ENCODE measurements at regions of chr18 and their contacts with region 1.

Region 1: DNA sequence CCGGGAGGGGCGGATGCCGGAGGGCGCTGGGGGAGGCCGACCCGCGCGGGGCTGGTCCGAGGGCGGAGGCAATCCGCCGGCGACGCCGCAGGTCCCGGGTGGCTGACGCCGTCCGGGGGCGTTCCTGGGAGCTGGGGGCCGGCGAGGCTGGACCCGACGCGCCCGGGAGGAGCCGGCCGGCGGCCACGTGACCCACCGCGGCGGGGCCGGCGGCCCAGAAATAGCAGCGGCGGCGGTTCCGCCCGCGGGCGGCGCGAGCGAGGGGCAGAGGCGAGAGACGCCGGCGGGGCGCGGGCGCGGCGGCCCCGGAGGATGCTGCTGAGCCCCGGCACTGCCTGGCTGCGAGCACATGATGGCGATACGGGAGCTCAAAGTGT is at the start of gene RAB31:
- DNase-seq: peak; percentile 54 to 83 (median 65)
- ATAC-seq: peak; percentile 76 to 85 (median 83)
- H3K4me3 ChIP-seq: peak within 1 kb of the TSS; percentile 28 to 59 (median 54)
- H3K27ac ChIP-seq: peak within 1 kb of the TSS in 2 of 4 donors; percentile 69 to 78
- H3K4me1 ChIP-seq: no peaks in the 10 kb centered on the region
- H3K27me3 ChIP-seq: no peaks in the 10 kb centered on the region
- CTCF ChIP-seq: no peak
- total RNA-seq, gene RAB31: 1.4 to 28.2 (median 5.5) TPM

Region 2: DNA sequence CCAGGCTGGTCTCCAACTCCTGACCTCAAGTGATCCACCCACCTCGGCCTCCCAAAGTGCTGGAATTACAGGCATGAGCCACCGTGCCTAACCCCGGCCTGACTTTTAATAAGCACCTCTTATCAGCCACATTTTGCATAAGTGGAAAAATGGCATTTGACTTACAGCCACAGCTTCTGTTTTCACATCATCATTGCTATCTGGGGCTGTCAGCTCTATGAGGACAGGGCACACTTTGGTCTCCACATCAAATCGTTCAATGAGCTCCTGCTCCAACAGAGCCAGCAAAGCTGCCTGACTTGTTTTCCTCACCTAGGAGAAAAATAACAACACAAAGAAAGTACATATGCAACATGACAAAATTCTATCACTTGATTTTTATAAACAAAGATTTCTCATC is 120.1 kb before region 1 on chr18:
- intact Hi-C with region 1: loop called in 1 of 3 experiments (anchors 10 kb)
- DNase-seq: no peak
- ATAC-seq: no peak
- H3K4me3 ChIP-seq: no peak overlapping the region
- H3K27ac ChIP-seq: no peak overlapping the region
- H3K4me1 ChIP-seq: peaks cover 0 to 4% (median 3%) of the 10 kb centered on the region in 3 donors
- H3K27me3 ChIP-seq: no peaks in the 10 kb centered on the region
- CTCF ChIP-seq: no peak

Region 3: DNA sequence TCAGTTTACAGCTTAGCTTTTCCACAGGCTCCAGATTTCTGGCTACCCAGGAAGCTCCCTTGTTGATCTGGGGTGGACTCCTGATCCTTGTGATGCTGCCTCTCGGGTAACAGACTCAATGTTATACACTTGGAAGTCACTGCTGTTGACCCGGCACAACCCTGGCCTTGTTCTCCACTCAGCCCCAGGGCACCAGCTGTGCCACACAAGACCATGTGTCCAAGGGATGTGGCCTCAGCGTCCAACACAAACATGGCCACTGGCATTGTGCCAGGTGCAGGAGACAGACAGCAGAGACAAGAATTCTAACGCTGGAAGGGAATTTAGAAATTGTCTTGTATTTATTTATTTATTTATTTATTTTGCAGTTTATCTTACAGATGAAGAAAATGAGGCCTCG is 54.7 kb before region 1 on chr18:
- intact Hi-C with region 1: no loop called
- DNase-seq: peak in 5 of 6 donors; percentile 66 to 85 (median 80)
- ATAC-seq: peak; percentile 63 to 94 (median 78)
- H3K4me3 ChIP-seq: no peak overlapping the region
- H3K27ac ChIP-seq: no peak overlapping the region
- H3K4me1 ChIP-seq: no peaks in the 10 kb centered on the region
- H3K27me3 ChIP-seq: no peaks in the 10 kb centered on the region
- CTCF ChIP-seq: no peak

Region 4: GRCh38 chr18:9766076-9766481 is 58.0 kb after region 1 on chr18:
- intact Hi-C with region 1: loop called in 1 of 3 experiments (anchors 10 kb)
- DNase-seq: no peak
- ATAC-seq: no peak
- H3K4me3 ChIP-seq: no peak overlapping the region
- H3K27ac ChIP-seq: no peak overlapping the region
- H3K4me1 ChIP-seq: no peaks in the 10 kb centered on the region
- H3K27me3 ChIP-seq: no peaks in the 10 kb centered on the region
- CTCF ChIP-seq: no peak

Measured in pancreas (tissue), 10 donors.